ENCODE measurements at regions of chr1 and their contacts with region 1.

Region 1: DNA sequence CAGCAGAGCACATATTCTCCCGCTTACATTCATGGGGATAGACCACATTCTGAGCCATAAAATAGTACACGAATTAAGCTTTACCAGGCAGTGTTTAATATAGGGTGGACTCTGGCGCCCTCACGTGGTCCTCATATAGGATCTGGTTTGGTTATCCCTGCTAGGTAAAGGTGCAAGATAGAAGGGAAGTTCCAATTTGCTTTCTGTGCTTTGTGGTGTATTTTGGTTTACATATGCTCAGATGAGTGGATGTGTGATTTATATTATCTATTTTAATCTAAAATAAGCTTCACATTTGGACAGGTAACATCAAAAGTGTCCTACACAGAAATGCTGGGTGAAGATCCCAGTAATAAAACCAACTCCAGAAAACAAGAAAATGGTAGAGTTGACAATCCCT is 3.6 kb downstream of the CR1 start:
- DNase-seq: peak; percentile 23
- H3K4me3 ChIP-seq: no peak overlapping the region
- CTCF ChIP-seq: peak; percentile 66

Region 2: GRCh38 chr1:207084701-207085180 is 414.8 kb before region 1 on chr1:
- CTCF ChIA-PET with region 1: interaction called, 17 read pairs
- POLR2A ChIA-PET with region 1: no interaction called
- DNase-seq: no peak
- H3K4me3 ChIP-seq: no peak overlapping the region
- CTCF ChIP-seq: peak; percentile 44

Region 3: GRCh38 chr1:207181838-207182237 is 317.7 kb before region 1 on chr1:
- CTCF ChIA-PET with region 1: no interaction called
- POLR2A ChIA-PET with region 1: no interaction called
- DNase-seq: no peak
- H3K4me3 ChIP-seq: no peak overlapping the region
- CTCF ChIP-seq: no peak

Measured in AG04449 (cell line).